ENCODE measurements at regions of chr12 and their contacts with region 1.

Region 1: GRCh38 chr12:106302401-106303201 is at the start of gene TCP11L2:
- DNase-seq: peak; percentile 98
- H3K4me3 ChIP-seq: peak within 1 kb of the TSS; percentile 70 to 99 (median 94)
- H3K27ac ChIP-seq: peak within 1 kb of the TSS; percentile 94 to 99 (median 96)
- H3K4me1 ChIP-seq: peaks cover 13 to 62% (median 46%) of the 10 kb centered on the region in 6 donors
- H3K27me3 ChIP-seq: no peaks in the 10 kb centered on the region
- CTCF ChIP-seq: peak in 1 of 11 experiments; percentile 5
- POLR2A ChIP-seq: peak in 2 of 3 donors; percentile 33 to 60
- total RNA-seq, gene TCP11L2: 39.3 to 88.3 (median 52.1) TPM

Region 2: DNA sequence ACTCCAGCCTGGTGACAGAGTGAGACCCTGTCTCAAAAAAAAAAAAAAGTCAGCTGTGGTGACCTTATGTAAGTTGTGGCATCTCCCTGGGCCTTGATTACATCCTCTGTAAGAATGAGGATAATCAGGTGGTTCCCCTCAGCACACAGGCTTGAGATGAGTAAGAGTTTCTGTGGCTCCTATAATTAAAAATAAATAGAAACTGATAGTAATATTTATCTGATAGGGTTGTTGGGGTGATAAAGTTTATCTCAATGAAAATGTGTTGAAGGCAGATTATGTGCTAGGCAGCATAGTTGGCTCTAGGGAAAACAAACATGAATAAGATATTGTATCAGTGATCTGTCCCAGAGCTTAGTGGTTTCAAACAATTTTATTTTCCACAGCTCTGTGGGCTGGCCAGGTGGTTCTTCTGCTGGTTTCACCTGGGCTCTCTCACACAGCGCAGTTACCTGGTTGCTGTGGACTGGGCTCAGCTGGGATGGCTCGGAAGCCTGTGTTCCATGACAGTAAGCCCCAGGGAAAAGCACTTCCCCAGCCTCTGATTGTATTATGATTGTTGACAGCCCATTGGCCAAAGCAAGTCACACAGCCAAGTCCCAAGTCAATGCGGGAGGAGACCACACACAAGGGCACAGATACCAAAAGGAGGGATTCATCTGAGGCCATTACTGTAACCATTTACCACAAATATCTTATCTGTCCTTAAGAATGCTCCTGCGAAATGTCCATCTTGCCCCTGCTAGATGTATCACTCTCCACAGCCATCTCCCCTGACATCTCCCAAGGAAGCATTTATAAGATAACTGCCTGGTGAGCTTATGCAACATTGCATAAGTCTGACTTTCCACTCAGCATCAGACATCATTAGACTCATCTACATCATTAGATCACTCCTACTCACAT is 315.6 kb before region 1 on chr12:
- intact Hi-C with region 1: no loop called
- DNase-seq: no peak
- H3K4me3 ChIP-seq: no peak overlapping the region
- H3K27ac ChIP-seq: no peak overlapping the region
- H3K4me1 ChIP-seq: peaks cover 0 to 10% (median 6%) of the 10 kb centered on the region in 6 donors
- H3K27me3 ChIP-seq: peaks cover 0 to 59% (median 0%) of the 10 kb centered on the region in 7 donors
- CTCF ChIP-seq: no peak
- POLR2A ChIP-seq: no peak

Region 3: DNA sequence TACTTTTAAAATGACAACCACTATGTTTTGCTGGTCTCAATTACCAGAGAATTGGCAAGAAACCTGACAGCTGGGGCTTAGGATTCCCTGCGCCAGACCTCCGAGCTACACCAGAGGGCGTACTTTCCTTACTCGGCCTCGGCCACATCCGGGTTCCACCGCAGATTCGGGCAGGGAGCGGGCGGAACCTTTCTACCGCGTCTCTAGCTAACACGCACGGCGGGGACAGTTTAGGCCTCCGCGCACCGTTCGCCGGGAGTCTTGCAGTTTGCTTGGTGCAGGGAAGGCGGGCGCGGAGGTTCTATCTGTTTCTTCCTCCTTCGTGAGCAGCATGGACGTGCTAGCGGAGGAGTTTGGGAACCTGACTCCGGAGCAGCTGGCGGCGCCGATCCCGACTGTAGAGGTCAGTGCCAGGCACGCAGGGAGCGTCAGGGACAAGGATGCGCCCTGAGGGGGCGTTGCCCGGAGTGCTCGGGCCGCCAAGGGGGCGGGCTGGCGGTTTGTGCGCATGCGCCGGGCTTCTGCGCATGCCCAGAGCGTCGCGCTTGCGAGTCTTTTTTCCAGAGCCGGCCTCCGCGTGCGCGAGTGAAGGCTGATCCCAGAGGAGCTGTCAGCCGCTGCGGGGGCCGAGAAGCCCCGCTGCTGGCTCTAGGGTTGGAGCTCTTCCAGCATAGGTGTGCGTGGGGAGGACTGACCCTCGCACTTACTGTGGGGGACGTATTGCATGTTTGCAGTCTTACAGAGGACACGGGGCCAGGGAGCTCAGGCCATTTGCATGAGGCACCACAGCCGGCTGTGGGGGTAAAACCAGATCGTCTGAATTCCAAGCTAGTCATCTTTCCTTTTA is 55.2 kb after region 1 on chr12 and contains the start of gene POLR3B:
- intact Hi-C with region 1: loop called (anchors 10 kb)
- DNase-seq: peak; percentile 99
- H3K4me3 ChIP-seq: peak within 1 kb of the TSS; percentile 70 to 98 (median 88)
- H3K27ac ChIP-seq: peak within 1 kb of the TSS; percentile 91 to 97 (median 93)
- H3K4me1 ChIP-seq: peaks cover 8 to 36% (median 26%) of the 10 kb centered on the region in 6 donors
- H3K27me3 ChIP-seq: no peaks in the 10 kb centered on the region
- CTCF ChIP-seq: peak; percentile 84 to 96 (median 90)
- POLR2A ChIP-seq: no peak
- total RNA-seq, gene POLR3B: 5.2 to 10.0 (median 7.1) TPM

Region 4: GRCh38 chr12:106564678-106565329 is 262.2 kb after region 1 on chr12:
- intact Hi-C with region 1: no loop called
- DNase-seq: no peak
- H3K4me3 ChIP-seq: no peak overlapping the region
- H3K27ac ChIP-seq: no peak overlapping the region
- H3K4me1 ChIP-seq: no peaks in the 10 kb centered on the region
- H3K27me3 ChIP-seq: peaks cover 0 to 52% (median 4%) of the 10 kb centered on the region in 7 donors
- CTCF ChIP-seq: no peak
- POLR2A ChIP-seq: no peak